IMR-90 (cell line): ENCODE measurements at regions of chr12 and their contacts with region 1.

Region 1: GRCh38 chr12:118307069-118307954 is 65.4 kb downstream of the TAOK3 start:
- DNase-seq: peak; percentile 95
- ATAC-seq: peak; percentile 96
- H3K4me3 ChIP-seq: peak overlapping the region; percentile 55
- H3K27ac ChIP-seq: peak overlapping the region; percentile 97
- H3K4me1 ChIP-seq: peaks cover 6% of the 10 kb centered on the region
- H3K27me3 ChIP-seq: no peaks in the 10 kb centered on the region
- CTCF ChIP-seq: 0 out of 2 replicates have a peak, but pooled peaks have one; percentile 2
- POLR2A ChIP-seq: peak; percentile 73; the same call in 1 of the 2 replicates
- RAD21 ChIP-seq: peak; percentile 9

Region 2: GRCh38 chr12:118189741-118190191 is 117.5 kb before region 1 on chr12:
- CTCF ChIA-PET with region 1: interaction called, 4 read pairs
- POLR2A ChIA-PET with region 1: no interaction called
- dilution Hi-C with region 1: no loop called
- in situ Hi-C with region 1: no loop called
- intact Hi-C with region 1: loop called (anchors 5 kb)
- DNase-seq: peak; percentile 82
- ATAC-seq: peak; percentile 78
- H3K4me3 ChIP-seq: peak overlapping the region; percentile 56
- H3K27ac ChIP-seq: peak overlapping the region; percentile 100
- H3K4me1 ChIP-seq: no peaks in the 10 kb centered on the region
- H3K27me3 ChIP-seq: no peaks in the 10 kb centered on the region
- CTCF ChIP-seq: no peak
- POLR2A ChIP-seq: no peak
- RAD21 ChIP-seq: no peak

Region 3: GRCh38 chr12:118337194-118337838 is 30.0 kb after region 1 on chr12:
- CTCF ChIA-PET with region 1: no interaction called
- POLR2A ChIA-PET with region 1: no interaction called
- dilution Hi-C with region 1: no loop called
- in situ Hi-C with region 1: no loop called
- intact Hi-C with region 1: loop called (anchors 2 kb)
- DNase-seq: peak; percentile 81
- ATAC-seq: peak; percentile 72
- H3K4me3 ChIP-seq: no peak overlapping the region
- H3K27ac ChIP-seq: peak overlapping the region; percentile 97; the same call in 1 of the 2 replicates
- H3K4me1 ChIP-seq: peaks cover 12% of the 10 kb centered on the region
- H3K27me3 ChIP-seq: no peaks in the 10 kb centered on the region
- CTCF ChIP-seq: no peak
- POLR2A ChIP-seq: no peak
- RAD21 ChIP-seq: no peak

Region 4: GRCh38 chr12:118357257-118358007 is 50.1 kb after region 1 on chr12:
- CTCF ChIA-PET with region 1: interaction called, 4 read pairs
- POLR2A ChIA-PET with region 1: interaction called, 6 read pairs
- dilution Hi-C with region 1: no loop called
- in situ Hi-C with region 1: no loop called
- intact Hi-C with region 1: loop called (anchors 2 kb)
- DNase-seq: peak; percentile 65
- ATAC-seq: peak; percentile 6
- H3K4me3 ChIP-seq: no peak overlapping the region
- H3K27ac ChIP-seq: peak overlapping the region; percentile 71
- H3K4me1 ChIP-seq: peaks cover 9% of the 10 kb centered on the region
- H3K27me3 ChIP-seq: no peaks in the 10 kb centered on the region
- CTCF ChIP-seq: no peak
- POLR2A ChIP-seq: no peak
- RAD21 ChIP-seq: no peak